ENCODE measurements at regions of chr10 and their contacts with region 1.

Region 1: DNA sequence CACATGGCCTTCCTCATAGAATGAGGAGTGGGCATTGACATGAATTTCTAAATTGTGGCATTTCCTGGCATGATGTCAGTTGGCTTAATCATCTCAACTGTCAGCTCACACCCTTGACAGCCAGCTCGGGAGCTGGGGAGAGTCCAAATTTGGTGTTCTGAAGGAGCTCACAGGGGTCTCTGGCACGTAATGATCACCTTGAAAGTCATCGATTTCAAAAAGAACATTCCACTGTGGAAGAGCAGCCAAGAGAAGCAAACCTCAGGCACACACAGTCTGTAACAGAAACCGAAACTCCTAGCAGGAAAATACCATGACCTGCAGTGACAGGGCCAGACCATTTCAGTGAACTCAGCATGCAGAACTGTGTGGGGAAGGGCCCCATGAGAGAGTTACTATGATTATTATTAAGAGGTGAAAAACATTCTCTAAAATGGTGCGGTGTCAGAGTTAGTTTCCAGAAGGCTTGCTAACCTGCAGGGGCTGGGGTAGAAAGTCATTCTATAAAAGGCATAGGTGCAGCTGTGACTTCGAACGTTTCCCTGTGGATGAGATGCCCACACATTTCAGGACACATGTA is 26.4 kb upstream of the KLF6 start:
- DNase-seq: peak; percentile 90
- H3K4me3 Mint-ChIP-seq: peak overlapping the region; percentile 68
- H3K27ac Mint-ChIP-seq: no peak overlapping the region
- H3K4me1 Mint-ChIP-seq: peaks cover 71% of the 10 kb centered on the region
- H3K27me3 Mint-ChIP-seq: no peaks in the 10 kb centered on the region

Region 2: GRCh38 chr10:3482200-3483138 is 328.9 kb before region 1 on chr10:
- intact Hi-C with region 1: no loop called
- DNase-seq: no peak
- H3K4me3 Mint-ChIP-seq: no peak overlapping the region
- H3K27ac Mint-ChIP-seq: peak overlapping the region; percentile 24
- H3K4me1 Mint-ChIP-seq: peaks cover 33% of the 10 kb centered on the region
- H3K27me3 Mint-ChIP-seq: peaks cover 11% of the 10 kb centered on the region

Region 3: DNA sequence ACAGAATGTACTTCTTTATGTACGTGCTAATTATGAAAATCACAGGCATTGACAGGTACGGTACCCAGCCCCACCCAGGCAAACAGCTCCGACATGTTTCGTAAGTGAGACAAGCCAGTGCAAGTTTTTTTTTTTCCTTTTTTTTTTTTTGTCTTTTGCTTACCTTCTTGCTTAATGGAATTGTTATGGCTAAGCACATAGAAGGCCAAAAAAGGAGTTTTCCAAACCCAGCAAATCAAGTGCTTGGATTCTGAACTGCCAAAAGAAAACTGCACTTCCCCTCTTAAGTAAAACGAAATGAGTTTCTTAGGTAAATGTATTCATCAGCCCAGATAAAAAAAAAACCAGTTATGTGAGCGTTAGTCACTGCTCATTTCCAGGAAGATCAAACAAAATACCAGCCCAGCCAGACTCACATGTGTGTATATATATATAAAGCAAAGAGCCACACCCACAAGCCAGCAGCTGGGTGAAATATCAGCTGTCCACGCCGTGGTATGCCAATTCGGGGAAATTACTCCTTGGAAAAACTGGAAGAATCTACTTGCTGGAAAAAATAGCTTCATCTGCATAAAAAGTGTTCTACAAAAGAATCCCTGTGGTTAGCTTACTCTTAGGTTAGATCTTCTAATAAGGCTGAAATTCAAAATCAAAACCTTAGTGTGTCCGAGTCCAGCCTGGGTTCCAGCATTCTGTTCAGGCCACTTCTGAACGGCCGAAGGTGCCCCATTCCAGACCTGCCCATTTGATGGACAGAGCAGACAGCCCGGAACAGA is 34.4 kb before region 1 on chr10:
- intact Hi-C with region 1: loop called (anchors 5 kb)
- DNase-seq: peak; percentile 89
- H3K4me3 Mint-ChIP-seq: peak overlapping the region; percentile 76
- H3K27ac Mint-ChIP-seq: peak overlapping the region; percentile 86
- H3K4me1 Mint-ChIP-seq: peaks cover 61% of the 10 kb centered on the region
- H3K27me3 Mint-ChIP-seq: no peaks in the 10 kb centered on the region

Region 4: DNA sequence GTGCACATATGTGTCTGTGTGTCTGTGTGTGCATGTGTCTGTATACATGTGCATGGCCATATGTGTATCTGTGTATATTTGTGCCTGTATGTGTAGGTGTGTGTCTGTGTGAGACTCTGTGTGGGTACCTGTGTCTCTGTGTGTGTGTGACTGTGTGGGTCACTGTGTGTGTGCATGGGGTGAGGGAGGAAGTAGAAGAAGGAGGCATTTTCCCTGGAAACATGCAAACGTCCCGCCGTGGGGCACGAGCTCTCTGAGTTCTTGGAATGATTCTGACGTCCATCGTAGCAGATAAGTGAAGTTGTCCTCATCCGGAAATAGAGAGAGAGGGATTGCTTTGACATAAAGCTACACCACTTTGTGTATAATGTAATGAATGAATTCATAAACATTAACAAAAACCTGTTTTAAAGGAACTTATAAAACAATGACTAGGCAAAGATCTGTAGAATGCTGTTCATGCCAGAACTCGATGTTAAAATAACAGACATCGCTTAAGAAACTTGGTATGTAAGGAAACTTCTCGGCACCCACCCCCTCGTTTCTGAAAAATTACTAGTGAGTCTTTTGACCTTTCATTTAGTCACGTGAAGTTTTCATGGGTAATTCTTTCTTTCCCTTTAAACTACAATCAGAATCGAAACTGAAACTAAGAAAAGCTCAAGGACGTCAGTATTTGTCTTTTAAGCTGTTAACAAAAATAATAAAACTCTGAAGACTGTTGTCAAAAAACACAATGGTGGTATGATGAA is 17.2 kb after region 1 on chr10:
- intact Hi-C with region 1: loop called (anchors 1 kb)
- DNase-seq: peak; percentile 78
- H3K4me3 Mint-ChIP-seq: peak overlapping the region; percentile 68
- H3K27ac Mint-ChIP-seq: peak overlapping the region; percentile 92
- H3K4me1 Mint-ChIP-seq: peaks cover 52% of the 10 kb centered on the region
- H3K27me3 Mint-ChIP-seq: no peaks in the 10 kb centered on the region

Region 5: DNA sequence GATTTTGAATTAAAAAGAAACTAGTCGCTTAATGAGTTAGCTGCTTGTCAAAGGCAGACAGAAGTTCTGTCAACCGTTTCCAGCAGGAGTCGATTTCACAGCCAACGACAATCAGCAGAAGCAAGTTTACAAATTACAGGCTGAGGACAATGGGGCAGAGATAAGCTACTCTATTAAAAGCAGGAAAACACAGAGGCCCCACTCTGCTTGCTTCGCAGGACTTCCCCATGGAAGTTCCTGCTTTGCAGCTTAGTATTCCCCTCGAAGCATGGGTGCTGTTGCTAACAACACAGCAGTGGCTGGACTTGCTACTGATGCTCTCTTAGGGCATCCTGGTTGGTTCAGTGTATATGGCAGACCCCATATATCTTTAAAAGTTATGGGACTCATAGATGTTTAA is 24.4 kb after region 1 on chr10:
- intact Hi-C with region 1: loop called (anchors 1 kb)
- DNase-seq: no peak
- H3K4me3 Mint-ChIP-seq: no peak overlapping the region
- H3K27ac Mint-ChIP-seq: peak overlapping the region; percentile 85
- H3K4me1 Mint-ChIP-seq: peaks cover 45% of the 10 kb centered on the region
- H3K27me3 Mint-ChIP-seq: no peaks in the 10 kb centered on the region

Region 6: GRCh38 chr10:3867454-3868270 is 56.3 kb after region 1 on chr10:
- intact Hi-C with region 1: loop called (anchors 1 kb)
- DNase-seq: no peak
- H3K4me3 Mint-ChIP-seq: no peak overlapping the region
- H3K27ac Mint-ChIP-seq: peak overlapping the region; percentile 91
- H3K4me1 Mint-ChIP-seq: peaks cover 61% of the 10 kb centered on the region
- H3K27me3 Mint-ChIP-seq: no peaks in the 10 kb centered on the region

Region 7: GRCh38 chr10:3873728-3874461 is 62.5 kb after region 1 on chr10:
- intact Hi-C with region 1: loop called (anchors 1 kb)
- DNase-seq: peak; percentile 81
- H3K4me3 Mint-ChIP-seq: peak overlapping the region; percentile 14
- H3K27ac Mint-ChIP-seq: peak overlapping the region; percentile 88
- H3K4me1 Mint-ChIP-seq: peaks cover 52% of the 10 kb centered on the region
- H3K27me3 Mint-ChIP-seq: no peaks in the 10 kb centered on the region

Region 8: GRCh38 chr10:4651404-4652037 is 840.1 kb after region 1 on chr10:
- intact Hi-C with region 1: loop called (anchors 1 kb)
- DNase-seq: peak; percentile 74
- H3K4me3 Mint-ChIP-seq: peak overlapping the region; percentile 75
- H3K27ac Mint-ChIP-seq: peak overlapping the region; percentile 92
- H3K4me1 Mint-ChIP-seq: peaks cover 32% of the 10 kb centered on the region
- H3K27me3 Mint-ChIP-seq: no peaks in the 10 kb centered on the region